GM10248 (cell line): ENCODE measurements at regions of chr9 and their contacts with region 1.

Region 1: GRCh38 chr9:92140074-92140753 is 25.0 kb upstream of the SPTLC1 start:
- DNase-seq: peak; percentile 82
- CTCF ChIP-seq: peak; percentile 98

Region 2: GRCh38 chr9:92115071-92115858 is 24.9 kb before region 1 on chr9 and contains the start of gene SPTLC1:
- CTCF ChIA-PET with region 1: interaction called, 20 read pairs
- POLR2A ChIA-PET with region 1: no interaction called
- DNase-seq: peak; percentile 96
- CTCF ChIP-seq: no peak

Region 3: DNA sequence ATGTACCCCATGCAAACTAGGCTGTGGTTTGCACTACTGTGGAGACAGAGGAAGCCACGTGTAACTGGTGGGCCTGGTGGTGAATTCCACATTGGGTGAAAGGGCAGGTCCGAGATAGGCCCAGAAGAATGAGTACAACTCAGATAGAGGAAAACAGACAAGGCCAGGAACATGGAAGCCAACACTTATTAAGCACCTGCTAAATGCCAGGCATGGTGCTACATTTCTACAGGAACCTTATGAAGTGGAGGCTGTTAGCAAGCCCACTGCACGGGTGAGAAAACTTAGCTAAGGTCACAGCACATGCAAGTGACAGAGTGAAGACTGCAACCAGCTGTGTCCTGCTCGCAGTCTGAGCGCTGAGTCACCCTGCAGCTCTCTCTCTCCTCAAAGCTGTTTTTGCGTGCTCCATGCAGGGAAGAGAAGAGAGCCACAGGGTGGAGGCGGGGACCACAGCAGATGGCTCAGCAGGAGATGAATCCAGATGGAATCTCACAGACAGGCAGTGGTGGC is 40.5 kb after region 1 on chr9:
- CTCF ChIA-PET with region 1: interaction called, 68 read pairs
- POLR2A ChIA-PET with region 1: no interaction called
- DNase-seq: no peak
- CTCF ChIP-seq: no peak

Region 4: GRCh38 chr9:92242260-92243136 is 102.3 kb after region 1 on chr9:
- CTCF ChIA-PET with region 1: interaction called, 109 read pairs
- POLR2A ChIA-PET with region 1: no interaction called
- DNase-seq: no peak
- CTCF ChIP-seq: no peak

Region 5: DNA sequence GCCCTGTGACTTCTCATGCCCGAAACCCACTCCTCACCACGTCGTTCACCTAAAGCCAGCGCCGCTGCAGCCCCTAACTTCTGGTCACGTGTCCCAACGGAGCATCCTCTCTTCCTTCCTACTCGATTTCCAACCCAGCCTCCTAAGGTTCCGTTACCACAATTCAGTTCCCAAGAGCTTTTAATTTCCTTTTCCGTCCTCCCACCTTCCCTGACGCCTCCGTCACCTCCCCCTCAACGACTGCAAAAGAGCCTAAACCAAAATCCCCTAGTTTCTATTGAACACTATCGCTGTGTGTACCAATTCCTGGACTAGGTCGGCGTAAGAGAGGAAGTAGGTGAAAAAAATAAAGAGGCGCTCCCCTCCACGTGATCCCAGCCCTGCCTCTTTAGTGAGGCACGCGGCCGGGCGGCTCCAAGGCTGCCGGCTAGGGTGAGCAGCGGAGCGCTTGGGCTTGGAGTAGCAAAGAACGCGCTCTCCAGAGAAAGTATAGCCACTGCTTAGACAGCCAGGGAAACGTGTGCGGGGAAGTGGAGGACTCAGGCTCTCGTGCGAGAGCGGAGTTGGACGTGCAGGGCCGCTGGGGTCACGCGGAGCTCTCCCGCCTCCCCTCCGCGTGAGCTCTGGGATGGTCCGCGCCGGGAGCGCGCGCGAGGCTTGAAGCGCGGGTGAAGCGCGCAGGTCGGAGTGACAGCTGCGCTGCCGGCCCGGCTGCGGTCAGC is 185.2 kb after region 1 on chr9 and contains the starts of genes CENPP and NOL8:
- CTCF ChIA-PET with region 1: interaction called, 12 read pairs
- POLR2A ChIA-PET with region 1: no interaction called
- DNase-seq: peak; percentile 89
- CTCF ChIP-seq: no peak

Region 6: GRCh38 chr9:92790542-92791527 is 650.6 kb after region 1 on chr9:
- CTCF ChIA-PET with region 1: interaction called, 44 read pairs
- POLR2A ChIA-PET with region 1: no interaction called
- DNase-seq: peak; percentile 77
- CTCF ChIP-seq: peak; percentile 88